ENCODE measurements at regions of chr17 and their contacts with region 1.

Region 1: GRCh38 chr17:3827124-3827773 is 18.8 kb downstream of the NCBP3 start:
- DNase-seq: peak; percentile 54
- H3K4me3 Mint-ChIP-seq: no peak overlapping the region
- H3K27ac Mint-ChIP-seq: peak overlapping the region; percentile 19
- H3K4me1 Mint-ChIP-seq: peaks cover 14% of the 10 kb centered on the region
- H3K27me3 Mint-ChIP-seq: no peaks in the 10 kb centered on the region

Region 2: DNA sequence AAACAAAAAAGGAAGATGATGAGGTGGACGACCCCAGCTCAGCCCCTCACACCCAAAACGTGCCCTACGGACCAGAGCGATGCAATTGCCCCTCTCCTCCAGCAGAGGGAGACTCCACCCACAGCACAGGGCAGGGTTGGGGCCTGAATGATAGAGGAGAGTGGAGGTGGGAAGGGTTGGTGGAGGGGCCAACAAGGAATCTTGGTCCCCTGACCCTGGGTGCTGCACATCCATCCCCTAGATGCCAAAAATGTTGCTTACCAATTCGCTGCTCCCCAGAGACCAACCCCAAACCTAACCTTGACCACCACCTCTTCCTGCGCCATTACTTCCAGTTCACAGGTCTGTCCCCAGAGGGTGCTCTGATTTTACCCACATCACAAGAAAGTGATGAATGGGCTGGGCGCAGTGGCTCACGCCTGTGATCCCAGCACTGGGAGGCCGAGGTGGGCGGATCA is 144.2 kb before region 1 on chr17:
- intact Hi-C with region 1: loop called (anchors 2 kb)
- DNase-seq: no peak
- H3K4me3 Mint-ChIP-seq: no peak overlapping the region
- H3K27ac Mint-ChIP-seq: peak overlapping the region; percentile 28
- H3K4me1 Mint-ChIP-seq: peaks cover 19% of the 10 kb centered on the region
- H3K27me3 Mint-ChIP-seq: no peaks in the 10 kb centered on the region